Activated CD4-positive, alpha-beta memory T cell treated with anti-CD3 and anti-CD28 coated beads for 36 hours (primary cell): ENCODE measurements at regions of chr2 and their contacts with region 1.

Region 1: GRCh38 chr2:173134703-173135102 is 59.1 kb downstream of the MAP3K20 start:
- DNase-seq: peak; percentile 20
- H3K4me3 Mint-ChIP-seq: no peak overlapping the region
- H3K27ac Mint-ChIP-seq: no peak overlapping the region
- H3K4me1 Mint-ChIP-seq: peaks cover 41% of the 10 kb centered on the region
- H3K27me3 Mint-ChIP-seq: peaks cover 46% of the 10 kb centered on the region

Region 2: GRCh38 chr2:173101687-173102086 is 33.0 kb before region 1 on chr2:
- CTCF ChIA-PET with region 1: interaction called, 4 read pairs
- POLR2A ChIA-PET with region 1: no interaction called
- intact Hi-C with region 1: loop called (anchors 1 kb)
- DNase-seq: no peak
- H3K4me3 Mint-ChIP-seq: no peak overlapping the region
- H3K27ac Mint-ChIP-seq: no peak overlapping the region
- H3K4me1 Mint-ChIP-seq: peaks cover 15% of the 10 kb centered on the region
- H3K27me3 Mint-ChIP-seq: no peaks in the 10 kb centered on the region